Endothelial cell of umbilical vein (primary cell): ENCODE measurements at regions of chr1 and their contacts with region 1.

Region 1: GRCh38 chr1:156356875-156357534 is 12.0 kb upstream of the RHBG start:
- DNase-seq: peak; percentile 23
- H3K4me3 ChIP-seq: no peak overlapping the region
- H3K27ac ChIP-seq: no peak overlapping the region
- H3K4me1 ChIP-seq: no peaks in the 10 kb centered on the region
- H3K27me3 ChIP-seq: peaks cover 17 to 28% of the 10 kb centered on the region in 2 experiments
- CTCF ChIP-seq: peak; percentile 60 to 84
- POLR2A ChIP-seq: no peak

Region 2: GRCh38 chr1:156371553-156372264 is 14.7 kb after region 1 on chr1:
- CTCF ChIA-PET with region 1: interaction called, 24 read pairs
- POLR2A ChIA-PET with region 1: no interaction called
- dilution Hi-C with region 1: no loop called
- intact Hi-C with region 1: no loop called
- DNase-seq: no peak
- H3K4me3 ChIP-seq: no peak overlapping the region
- H3K27ac ChIP-seq: no peak overlapping the region
- H3K4me1 ChIP-seq: peaks cover 6% of the 10 kb centered on the region
- H3K27me3 ChIP-seq: peaks cover 23 to 34% of the 10 kb centered on the region in 2 experiments
- CTCF ChIP-seq: no peak
- POLR2A ChIP-seq: no peak